ENCODE measurements at regions of chr16 and their contacts with region 1.

Region 1: GRCh38 chr16:28879841-28880588 is 1.7 kb downstream of the ATP2A1 start:
- DNase-seq: peak; percentile 86 to 91
- ATAC-seq: peak; percentile 40 to 55
- H3K4me3 ChIP-seq: peak overlapping the region; percentile 68 to 95 (median 75)
- H3K27ac ChIP-seq: peak overlapping the region; percentile 83 to 92 (median 90)
- H3K4me1 ChIP-seq: peaks cover 37 to 68% of the 10 kb centered on the region in 2 donors
- H3K27me3 ChIP-seq: no peaks in the 10 kb centered on the region
- CTCF ChIP-seq: peak in 3 of 5 experiments; percentile 24 to 44 (median 28)
- POLR2A ChIP-seq: peak; percentile 52 to 75

Region 2: DNA sequence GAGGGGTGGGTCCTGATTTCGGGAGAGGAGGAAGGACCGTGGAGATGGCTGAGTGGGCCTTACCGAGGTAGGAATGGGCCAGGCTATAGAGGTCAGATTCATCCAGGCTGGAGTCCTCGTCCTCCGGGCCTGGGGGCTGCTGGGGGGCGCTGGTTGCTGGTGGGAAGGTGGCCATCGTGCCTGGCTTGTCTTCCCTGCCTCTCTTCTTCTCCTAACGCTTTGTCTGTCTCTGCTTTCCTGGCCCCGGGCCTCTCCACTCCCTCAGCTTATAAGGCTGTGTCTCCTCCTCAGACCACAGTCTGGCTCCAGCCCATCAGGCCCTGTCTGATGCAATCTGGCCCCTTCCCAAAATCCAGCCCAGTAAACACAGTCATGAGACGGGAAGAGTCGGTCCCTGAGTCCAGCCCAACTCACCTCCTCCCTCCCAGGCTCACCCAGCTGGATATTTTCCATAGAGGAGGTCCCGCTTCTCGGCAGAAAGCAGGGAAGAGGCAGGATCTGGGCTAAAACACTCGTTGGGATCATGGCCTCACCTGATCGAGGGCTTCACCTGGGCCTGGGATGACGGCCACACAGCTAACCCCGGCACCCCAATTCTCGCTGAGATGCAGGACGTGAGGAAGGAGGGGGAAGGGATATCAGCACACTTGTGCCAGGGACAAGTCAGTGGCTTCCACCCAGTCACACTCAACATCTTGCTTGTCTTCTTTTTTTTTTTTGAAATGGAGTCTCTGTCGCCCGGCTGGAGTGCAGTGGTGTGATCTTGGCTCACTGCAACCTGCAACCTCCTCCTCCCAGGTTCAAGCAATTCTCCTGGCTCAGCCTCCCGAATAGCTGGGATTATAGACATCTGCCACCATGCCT is 341.1 kb before region 1 on chr16 and contains the start of gene NUPR1:
- in situ Hi-C with region 1: no loop called
- intact Hi-C with region 1: loop called (anchors 10 kb)
- DNase-seq: peak; percentile 98 to 99
- ATAC-seq: peak; percentile 84 to 85
- H3K4me3 ChIP-seq: peak within 1 kb of the TSS; percentile 66 to 79 (median 68)
- H3K27ac ChIP-seq: peak within 1 kb of the TSS; percentile 98 to 99 (median 99)
- H3K4me1 ChIP-seq: peaks cover 22 to 35% of the 10 kb centered on the region in 2 donors
- H3K27me3 ChIP-seq: no peaks in the 10 kb centered on the region
- CTCF ChIP-seq: no peak
- POLR2A ChIP-seq: peak; percentile 91 to 96
- total RNA-seq, gene NUPR1: 18.7 to 44.3 (median 22.6) TPM

Region 3: GRCh38 chr16:28924732-28925385 is 44.8 kb after region 1 on chr16 and contains the start of gene RABEP2:
- in situ Hi-C with region 1: no loop called
- intact Hi-C with region 1: loop called (anchors 2 kb)
- DNase-seq: peak; percentile 77 to 89
- ATAC-seq: peak; percentile 91 to 96
- H3K4me3 ChIP-seq: peak within 1 kb of the TSS; percentile 67 to 99 (median 86)
- H3K27ac ChIP-seq: peak within 1 kb of the TSS; percentile 83 to 99 (median 94)
- H3K4me1 ChIP-seq: peaks cover 9% of the 10 kb centered on the region in 2 donors
- H3K27me3 ChIP-seq: no peaks in the 10 kb centered on the region
- CTCF ChIP-seq: no peak
- POLR2A ChIP-seq: peak; percentile 63 to 69
- total RNA-seq, gene RABEP2: 2.9 to 13.9 (median 6.4) TPM

Region 4: GRCh38 chr16:28943281-28943680 is 63.3 kb after region 1 on chr16:
- in situ Hi-C with region 1: loop called in 1 of 4 experiments (anchors 10 kb)
- intact Hi-C with region 1: loop called (anchors 1 kb)
- DNase-seq: no peak
- ATAC-seq: no peak
- H3K4me3 ChIP-seq: no peak overlapping the region
- H3K27ac ChIP-seq: no peak overlapping the region
- H3K4me1 ChIP-seq: peaks cover 5 to 9% of the 10 kb centered on the region in 2 donors
- H3K27me3 ChIP-seq: no peaks in the 10 kb centered on the region
- CTCF ChIP-seq: no peak
- POLR2A ChIP-seq: no peak

Measured in gastrocnemius medialis (tissue), 4 donors.